H1 (cell line): ENCODE measurements at regions of chr17 and their contacts with region 1.

Region 1: DNA sequence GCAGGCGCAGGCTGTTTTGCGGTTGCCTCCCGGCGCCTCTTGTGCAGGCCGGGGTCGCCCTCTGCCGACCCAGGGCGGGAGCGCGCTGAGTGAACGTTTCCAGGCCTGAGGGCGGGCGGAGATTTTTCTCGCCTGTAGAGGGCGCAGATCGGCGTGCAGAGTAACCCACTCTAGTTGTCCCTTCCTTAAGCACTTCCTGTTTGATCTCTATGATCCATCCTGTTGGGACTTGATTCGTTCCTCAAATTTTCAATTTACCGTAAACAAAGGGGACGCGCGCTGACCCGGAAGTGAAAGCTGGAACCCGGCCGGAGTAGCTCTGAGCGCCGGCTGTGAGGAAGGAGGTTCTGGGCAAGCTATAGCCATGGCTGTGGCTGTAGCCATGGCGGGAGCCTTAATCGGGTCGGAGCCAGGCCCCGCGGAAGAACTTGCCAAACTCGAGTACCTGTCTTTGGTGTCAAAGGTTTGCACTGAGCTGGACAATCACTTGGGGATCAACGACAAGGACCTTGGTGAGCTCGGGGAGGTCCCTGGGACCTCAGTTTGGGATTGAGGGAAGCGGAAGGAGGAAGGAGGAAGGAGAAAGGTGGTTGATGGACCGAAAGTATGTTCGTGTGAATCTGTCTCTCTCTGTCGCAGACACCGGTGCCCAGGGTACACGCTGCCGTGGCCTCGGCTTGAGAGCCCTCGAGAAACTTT is at the start of gene DHX8:
- DNase-seq: peak; percentile 95 to 99
- H3K4me3 ChIP-seq: peak within 1 kb of the TSS; percentile 61 to 84 (median 78)
- H3K27ac ChIP-seq: peak within 1 kb of the TSS; percentile 79
- H3K4me1 ChIP-seq: peaks cover 0 to 6% (median under 1%) of the 10 kb centered on the region in 4 experiments; a peak in 4 of 7 replicates
- H3K27me3 ChIP-seq: no peaks in the 10 kb centered on the region
- CTCF ChIP-seq: peak; percentile 100
- EP300 ChIP-seq: peak in 1 of 2 experiments; percentile 68; a peak in 1 of 3 replicates
- POLR2A ChIP-seq: peak; percentile 77 to 94
- RAD21 ChIP-seq: peak; percentile 100
- total RNA-seq, gene DHX8: 57.0 and 59.4 TPM in 2 replicates

Region 2: DNA sequence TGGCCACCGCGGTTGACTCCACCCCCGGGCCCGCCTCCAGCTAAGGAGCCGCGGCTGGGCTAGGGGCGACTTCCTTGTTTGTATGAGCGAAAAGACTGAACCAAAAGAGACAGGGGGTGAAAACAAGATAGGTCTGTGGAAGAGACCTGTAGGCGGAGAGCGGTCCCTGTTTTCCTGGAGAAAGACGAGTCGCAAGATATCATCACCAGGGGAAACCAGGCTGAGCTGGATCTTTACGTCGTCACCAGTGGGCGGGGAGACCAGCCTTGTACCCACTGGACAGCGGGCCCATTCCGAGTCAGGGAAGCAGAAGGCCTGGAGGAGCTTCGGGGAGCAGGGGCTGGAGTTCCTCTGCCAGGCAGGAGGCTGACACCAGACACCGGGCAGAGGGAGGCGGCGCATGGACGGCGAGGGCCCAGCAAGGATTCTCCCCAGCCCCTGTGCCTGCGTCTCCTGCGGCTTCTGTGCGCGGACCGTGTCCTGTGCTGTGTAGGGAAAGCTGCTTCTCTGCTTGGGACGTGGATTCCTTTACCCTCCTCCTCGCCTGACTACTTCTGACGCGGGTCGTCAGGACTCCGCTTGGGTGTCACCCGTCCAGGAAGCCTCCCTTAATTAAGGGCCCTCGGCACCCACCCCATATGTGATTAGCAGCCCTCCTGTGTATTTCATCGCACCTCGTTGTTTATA is 95.3 kb before region 1 on chr17:
- CTCF ChIA-PET with region 1: interaction called, 296 read pairs
- POLR2A ChIA-PET with region 1: interaction called, 62 read pairs
- DNase-seq: peak in 1 of 2 experiments; percentile 93
- H3K4me3 ChIP-seq: peak overlapping the region; percentile 58 to 81 (median 70)
- H3K27ac ChIP-seq: peak overlapping the region; percentile 85
- H3K4me1 ChIP-seq: peaks cover 0 to 3% (median 0%) of the 10 kb centered on the region in 4 experiments; a peak in 3 of 7 replicates
- H3K27me3 ChIP-seq: no peaks in the 10 kb centered on the region
- CTCF ChIP-seq: no peak
- EP300 ChIP-seq: peak in 1 of 2 experiments; percentile 55; a peak in 1 of 3 replicates
- POLR2A ChIP-seq: peak in 1 of 2 experiments; percentile 61; a peak in 1 of 3 replicates
- RAD21 ChIP-seq: no peak

Region 3: GRCh38 chr17:43406676-43407645 is 76.9 kb before region 1 on chr17:
- CTCF ChIA-PET with region 1: interaction called, 296 read pairs
- POLR2A ChIA-PET with region 1: interaction called, 7 read pairs
- DNase-seq: no peak
- H3K4me3 ChIP-seq: no peak overlapping the region
- H3K27ac ChIP-seq: no peak overlapping the region
- H3K4me1 ChIP-seq: peaks cover 0 to 6% (median 2%) of the 10 kb centered on the region in 4 experiments; a peak in 3 of 7 replicates
- H3K27me3 ChIP-seq: no peaks in the 10 kb centered on the region
- CTCF ChIP-seq: no peak
- EP300 ChIP-seq: no peak
- POLR2A ChIP-seq: no peak
- RAD21 ChIP-seq: no peak

Region 4: DNA sequence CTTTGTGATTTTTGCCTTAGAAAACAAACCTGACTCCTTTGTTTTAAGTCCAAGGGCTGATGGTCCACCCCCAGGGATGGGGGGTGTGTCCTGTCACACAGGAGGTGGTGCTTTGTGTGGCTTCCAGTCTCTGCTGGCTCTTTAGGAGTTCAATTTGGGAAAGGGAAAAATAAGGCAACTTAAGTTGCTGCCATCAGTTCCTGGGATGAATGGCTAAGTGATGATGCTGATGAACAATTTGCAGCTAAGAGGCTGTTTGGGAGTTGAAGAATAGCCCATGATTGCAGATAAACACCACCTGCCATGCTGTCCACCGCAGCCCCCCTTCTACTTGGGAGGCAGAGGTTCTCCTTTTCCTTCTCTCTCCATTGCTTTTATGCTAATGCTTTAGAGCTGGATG is 44.8 kb before region 1 on chr17:
- CTCF ChIA-PET with region 1: interaction called, 10 read pairs
- POLR2A ChIA-PET with region 1: interaction called, 3 read pairs
- DNase-seq: no peak
- H3K4me3 ChIP-seq: no peak overlapping the region
- H3K27ac ChIP-seq: no peak overlapping the region
- H3K4me1 ChIP-seq: peaks cover 0 to 2% (median 0%) of the 10 kb centered on the region in 4 experiments; a peak in 3 of 7 replicates
- H3K27me3 ChIP-seq: no peaks in the 10 kb centered on the region
- CTCF ChIP-seq: no peak
- EP300 ChIP-seq: no peak
- POLR2A ChIP-seq: no peak
- RAD21 ChIP-seq: no peak

Region 5: GRCh38 chr17:43673516-43674323 is 189.9 kb after region 1 on chr17:
- CTCF ChIA-PET with region 1: no interaction called
- POLR2A ChIA-PET with region 1: no interaction called
- DNase-seq: peak in 1 of 2 experiments; percentile 93
- H3K4me3 ChIP-seq: no peak overlapping the region
- H3K27ac ChIP-seq: no peak overlapping the region
- H3K4me1 ChIP-seq: peaks cover 0 to 20% (median 13%) of the 10 kb centered on the region in 4 experiments; a peak in 6 of 7 replicates
- H3K27me3 ChIP-seq: 0 out of 7 replicates have a peak, but pooled peaks cover 0 to 2% (median 0%) of the 10 kb centered on the region in 4 experiments
- CTCF ChIP-seq: peak; percentile 84 to 92 (median 91)
- EP300 ChIP-seq: no peak
- POLR2A ChIP-seq: no peak
- RAD21 ChIP-seq: peak; percentile 94 to 95